ENCODE measurements at regions of chr12 and their contacts with region 1.

Region 1: GRCh38 chr12:64362721-64363300 is 27.7 kb downstream of the C12orf56 start:
- DNase-seq: no peak
- ATAC-seq: no peak
- H3K4me3 Mint-ChIP-seq: no peak overlapping the region
- H3K27ac Mint-ChIP-seq: no peak overlapping the region
- H3K4me1 Mint-ChIP-seq: no peaks in the 10 kb centered on the region
- H3K27me3 Mint-ChIP-seq: no peaks in the 10 kb centered on the region

Region 2: GRCh38 chr12:64373193-64373592 is 10.4 kb after region 1 on chr12:
- CTCF ChIA-PET with region 1: no interaction called
- POLR2A ChIA-PET with region 1: no interaction called
- intact Hi-C with region 1: loop called in 1 of 2 experiments (anchors 2 kb)
- DNase-seq: no peak
- ATAC-seq: no peak
- H3K4me3 Mint-ChIP-seq: no peak overlapping the region
- H3K27ac Mint-ChIP-seq: no peak overlapping the region
- H3K4me1 Mint-ChIP-seq: no peaks in the 10 kb centered on the region
- H3K27me3 Mint-ChIP-seq: no peaks in the 10 kb centered on the region

Measured in activated CD4-positive, alpha-beta T cell treated with anti-CD3 and anti-CD28 coated beads for 36 hours (primary cell).